Activated CD4-positive, alpha-beta T cell treated with anti-CD3 and anti-CD28 coated beads for 36 hours (primary cell): ENCODE measurements at regions of chr4 and their contacts with region 1.

Region 1: GRCh38 chr4:113547487-113548042 is 214.0 kb downstream of the CAMK2D start:
- DNase-seq: peak; percentile 95
- ATAC-seq: peak; percentile 99
- H3K4me3 Mint-ChIP-seq: no peak overlapping the region
- H3K27ac Mint-ChIP-seq: peak overlapping the region; percentile 49
- H3K4me1 Mint-ChIP-seq: peaks cover 24% of the 10 kb centered on the region
- H3K27me3 Mint-ChIP-seq: no peaks in the 10 kb centered on the region

Region 2: GRCh38 chr4:113404841-113405240 is 142.7 kb before region 1 on chr4:
- CTCF ChIA-PET with region 1: no interaction called
- POLR2A ChIA-PET with region 1: no interaction called
- intact Hi-C with region 1: no loop called
- DNase-seq: no peak
- ATAC-seq: no peak
- H3K4me3 Mint-ChIP-seq: no peak overlapping the region
- H3K27ac Mint-ChIP-seq: no peak overlapping the region
- H3K4me1 Mint-ChIP-seq: no peaks in the 10 kb centered on the region
- H3K27me3 Mint-ChIP-seq: no peaks in the 10 kb centered on the region

Region 3: DNA sequence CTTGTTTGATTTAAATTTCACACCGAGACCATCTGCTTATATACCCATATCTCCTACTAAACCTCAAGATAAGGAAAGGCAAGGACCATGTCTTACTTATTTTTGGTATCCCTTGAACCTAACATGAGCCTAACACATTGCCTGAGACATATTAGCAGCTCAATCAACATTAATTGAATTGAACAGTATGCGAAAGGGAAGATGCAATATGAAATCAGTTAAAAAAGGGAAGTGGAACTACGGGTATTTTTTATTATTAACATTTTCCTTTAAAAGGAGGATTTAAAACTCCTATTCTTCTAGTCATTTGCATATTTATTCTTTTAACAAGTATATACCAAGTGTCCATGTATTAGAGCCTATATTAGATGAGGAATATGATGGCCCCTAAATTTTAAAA is 16.9 kb after region 1 on chr4:
- CTCF ChIA-PET with region 1: interaction called, 50 read pairs
- POLR2A ChIA-PET with region 1: interaction called, 4 read pairs
- intact Hi-C with region 1: loop called in 1 of 2 experiments (anchors 1 kb)
- DNase-seq: no peak
- ATAC-seq: no peak
- H3K4me3 Mint-ChIP-seq: no peak overlapping the region
- H3K27ac Mint-ChIP-seq: peak overlapping the region; percentile 17
- H3K4me1 Mint-ChIP-seq: peaks cover 39% of the 10 kb centered on the region
- H3K27me3 Mint-ChIP-seq: no peaks in the 10 kb centered on the region

Region 4: GRCh38 chr4:113673450-113673849 is 125.9 kb after region 1 on chr4:
- CTCF ChIA-PET with region 1: interaction called, 11 read pairs
- POLR2A ChIA-PET with region 1: no interaction called
- intact Hi-C with region 1: no loop called
- DNase-seq: peak; percentile 70
- ATAC-seq: peak; percentile 98
- H3K4me3 Mint-ChIP-seq: no peak overlapping the region
- H3K27ac Mint-ChIP-seq: peak overlapping the region; percentile 51
- H3K4me1 Mint-ChIP-seq: peaks cover 56% of the 10 kb centered on the region
- H3K27me3 Mint-ChIP-seq: no peaks in the 10 kb centered on the region

Region 5: GRCh38 chr4:113823291-113823659 is 275.7 kb after region 1 on chr4:
- CTCF ChIA-PET with region 1: interaction called, 3 read pairs
- POLR2A ChIA-PET with region 1: no interaction called
- intact Hi-C with region 1: loop called (anchors 2 kb)
- DNase-seq: peak; percentile 12
- ATAC-seq: no peak
- H3K4me3 Mint-ChIP-seq: no peak overlapping the region
- H3K27ac Mint-ChIP-seq: peak overlapping the region; percentile 40
- H3K4me1 Mint-ChIP-seq: peaks cover 62% of the 10 kb centered on the region
- H3K27me3 Mint-ChIP-seq: no peaks in the 10 kb centered on the region